Aorta (tissue), 5 donors: ENCODE measurements at regions of chr7 and their contacts with region 1.

Region 1: DNA sequence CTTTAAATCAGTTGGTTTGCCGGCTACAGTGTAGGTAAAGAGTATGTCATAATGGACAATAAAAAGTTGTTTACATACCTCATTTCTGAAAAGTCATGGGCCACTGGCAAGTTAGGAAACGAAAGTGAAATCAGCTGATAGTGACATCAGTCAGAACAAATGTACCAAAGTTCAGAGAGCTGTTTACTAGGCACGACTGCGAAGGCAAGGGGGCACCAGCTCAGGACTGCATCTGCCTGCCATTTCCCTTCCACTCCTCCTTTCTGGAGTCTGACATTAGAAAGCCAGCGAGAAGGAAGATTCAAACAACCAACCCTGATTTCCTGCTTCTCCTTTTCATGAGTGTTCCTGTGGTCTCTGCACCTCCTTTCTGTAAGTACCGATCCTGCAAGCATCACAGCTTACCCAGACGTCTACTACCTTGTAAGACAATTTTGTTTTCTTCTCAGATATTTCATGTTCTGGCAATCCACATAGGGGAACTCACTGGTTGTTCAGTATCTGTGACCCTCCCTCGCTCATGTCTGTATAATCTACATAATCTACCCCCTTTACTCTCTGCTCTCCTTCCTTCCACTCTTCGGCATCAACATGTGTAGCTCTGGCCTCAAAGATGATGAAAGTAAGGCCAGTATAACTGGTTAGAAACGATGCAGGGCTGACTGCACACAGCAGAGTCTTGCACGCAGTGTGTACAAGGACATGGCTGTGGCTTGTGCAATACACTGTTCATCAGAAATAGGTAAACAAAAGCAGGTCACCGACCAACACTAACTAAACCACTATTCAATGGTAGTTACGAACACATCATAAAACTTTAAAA is at the start of gene TMEM140:
- DNase-seq: no peak
- ATAC-seq: peak; percentile 91
- H3K4me3 ChIP-seq: peak within 1 kb of the TSS; percentile 73 to 87
- H3K27ac ChIP-seq: peak within 1 kb of the TSS; percentile 95 to 99
- H3K4me1 ChIP-seq: no peaks in the 10 kb centered on the region
- H3K27me3 ChIP-seq: no peaks in the 10 kb centered on the region
- total RNA-seq, gene TMEM140: 12.0 to 32.4 TPM

Region 2: DNA sequence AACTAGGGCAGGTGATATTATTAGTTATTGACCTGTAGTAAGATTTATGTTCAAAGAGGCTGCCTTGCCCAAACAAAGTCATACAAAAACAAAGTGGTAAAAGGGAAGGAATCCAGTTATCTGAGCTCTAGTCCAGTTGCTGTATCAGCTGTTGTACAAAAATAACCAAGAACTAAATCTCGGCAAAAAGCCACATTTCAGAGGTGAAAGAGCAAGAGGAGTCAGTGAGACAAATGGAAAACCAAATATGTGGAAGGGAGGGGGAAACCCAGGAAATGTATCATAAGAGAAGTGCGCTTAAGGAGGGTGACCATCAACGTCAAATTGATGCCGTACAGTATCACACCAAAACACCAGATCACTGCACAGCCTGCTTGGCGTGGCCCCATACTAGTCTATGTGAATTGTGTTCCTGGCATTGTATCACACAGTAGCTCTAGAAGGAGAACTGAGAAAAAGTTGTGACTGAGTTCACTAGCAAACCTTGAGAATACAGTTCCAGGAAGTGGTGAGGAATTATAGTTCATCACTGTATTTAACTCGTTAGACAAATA is 155.4 kb before region 1 on chr7:
- intact Hi-C with region 1: loop called (anchors 5 kb)
- DNase-seq: no peak
- ATAC-seq: peak; percentile 28
- H3K4me3 ChIP-seq: peak overlapping the region in 1 of 2 donors; percentile 18
- H3K27ac ChIP-seq: peak overlapping the region; percentile 1 to 90
- H3K4me1 ChIP-seq: peaks cover 8 to 13% of the 10 kb centered on the region in 2 donors
- H3K27me3 ChIP-seq: no peaks in the 10 kb centered on the region